ENCODE measurements at regions of chr5 and their contacts with region 1.

Region 1: DNA sequence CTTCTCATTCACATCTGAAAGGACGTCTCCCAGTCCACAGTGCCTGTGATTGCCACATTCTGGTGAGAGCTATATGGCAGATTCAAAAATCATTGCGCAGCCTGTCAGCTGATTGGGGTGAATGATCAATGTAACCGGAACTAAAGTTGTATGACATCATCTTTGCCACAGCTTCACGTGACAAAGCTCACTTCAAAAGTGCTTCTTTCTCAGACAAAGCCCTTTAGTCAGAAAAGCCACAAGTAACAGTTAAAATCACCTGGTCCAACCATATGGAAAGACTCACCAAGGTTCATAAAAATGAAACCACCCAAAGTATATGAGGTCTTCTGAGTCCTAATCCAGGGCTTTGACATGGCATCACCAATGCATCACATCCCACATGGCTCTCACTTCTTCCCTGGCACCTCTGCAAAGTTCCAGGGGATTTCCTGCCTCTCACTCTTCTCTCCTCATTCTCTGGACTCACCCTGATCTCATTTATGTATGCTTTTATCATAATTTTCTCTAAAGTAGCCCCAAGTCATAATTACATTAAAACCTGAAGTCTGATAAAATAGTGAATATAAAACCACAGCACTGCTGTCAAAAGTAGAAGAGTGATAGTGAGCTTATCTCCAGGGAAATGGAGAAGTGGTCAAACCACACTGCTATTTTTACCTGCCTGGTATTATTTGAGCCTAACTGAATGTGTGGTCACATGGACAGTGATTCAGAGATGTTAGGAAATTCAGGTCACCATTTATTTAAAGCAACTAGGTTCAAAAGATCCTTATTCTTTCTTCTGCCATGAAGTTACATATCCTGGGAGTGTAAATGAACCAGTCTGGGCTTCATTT is 193.1 kb upstream of the PTGER4 start:
- DNase-seq: peak; percentile 82
- ATAC-seq: peak; percentile 75
- H3K4me3 Mint-ChIP-seq: peak overlapping the region; percentile 12
- H3K27ac Mint-ChIP-seq: peak overlapping the region; percentile 91
- H3K4me1 Mint-ChIP-seq: peaks cover 82% of the 10 kb centered on the region
- H3K27me3 Mint-ChIP-seq: no peaks in the 10 kb centered on the region

Region 2: GRCh38 chr5:40001796-40002195 is 484.9 kb before region 1 on chr5:
- CTCF ChIA-PET with region 1: no interaction called
- POLR2A ChIA-PET with region 1: no interaction called
- intact Hi-C with region 1: no loop called
- DNase-seq: no peak
- ATAC-seq: no peak
- H3K4me3 Mint-ChIP-seq: no peak overlapping the region
- H3K27ac Mint-ChIP-seq: no peak overlapping the region
- H3K4me1 Mint-ChIP-seq: no peaks in the 10 kb centered on the region
- H3K27me3 Mint-ChIP-seq: peaks cover 12% of the 10 kb centered on the region

Region 3: DNA sequence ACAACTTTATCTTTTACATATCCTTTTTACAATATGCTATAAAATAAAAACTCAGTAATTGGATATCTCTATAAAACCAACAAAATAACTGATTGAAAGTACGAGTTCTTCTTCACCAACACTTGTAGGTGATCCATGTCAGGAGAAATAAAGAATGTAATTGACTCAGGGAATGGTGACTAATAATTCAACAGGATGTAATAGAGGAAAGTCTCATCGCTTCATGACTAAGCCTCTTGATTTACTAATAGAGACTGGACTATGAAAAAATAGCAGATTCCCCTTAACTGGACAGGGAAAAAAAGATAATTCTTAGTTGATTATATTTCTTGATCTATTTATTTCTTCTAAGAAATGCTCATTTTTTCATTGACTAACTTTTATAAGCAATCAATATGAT is 314.7 kb before region 1 on chr5:
- CTCF ChIA-PET with region 1: no interaction called
- POLR2A ChIA-PET with region 1: no interaction called
- intact Hi-C with region 1: loop called in 1 of 2 experiments (anchors 5 kb)
- DNase-seq: no peak
- ATAC-seq: no peak
- H3K4me3 Mint-ChIP-seq: no peak overlapping the region
- H3K27ac Mint-ChIP-seq: no peak overlapping the region
- H3K4me1 Mint-ChIP-seq: peaks cover 13% of the 10 kb centered on the region
- H3K27me3 Mint-ChIP-seq: no peaks in the 10 kb centered on the region

Region 4: GRCh38 chr5:40333459-40334244 is 153.0 kb before region 1 on chr5:
- CTCF ChIA-PET with region 1: no interaction called
- POLR2A ChIA-PET with region 1: no interaction called
- intact Hi-C with region 1: loop called (anchors 1 kb)
- DNase-seq: peak; percentile 49
- ATAC-seq: peak; percentile 96
- H3K4me3 Mint-ChIP-seq: no peak overlapping the region
- H3K27ac Mint-ChIP-seq: no peak overlapping the region
- H3K4me1 Mint-ChIP-seq: peaks cover 41% of the 10 kb centered on the region
- H3K27me3 Mint-ChIP-seq: no peaks in the 10 kb centered on the region

Region 5: DNA sequence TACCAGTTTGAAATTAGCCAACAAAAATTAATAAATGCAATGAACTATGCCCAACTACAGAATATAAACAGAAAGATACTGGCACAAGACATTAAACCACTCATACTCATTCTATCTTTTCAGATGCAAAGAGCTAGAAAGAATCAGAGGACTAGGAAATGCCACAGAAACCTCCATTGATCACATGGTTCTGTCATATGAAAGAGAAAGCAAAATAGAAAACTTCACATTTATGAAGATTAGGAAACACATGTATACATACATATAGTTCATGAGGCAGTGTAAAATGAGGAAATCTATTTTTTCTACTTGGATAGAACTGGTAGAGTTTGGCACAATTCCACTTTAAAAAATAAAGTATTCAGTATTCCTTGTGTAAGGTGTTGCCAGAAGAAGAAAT is 82.0 kb before region 1 on chr5:
- CTCF ChIA-PET with region 1: interaction called, 6 read pairs
- POLR2A ChIA-PET with region 1: interaction called, 13 read pairs
- intact Hi-C with region 1: loop called (anchors 1 kb)
- DNase-seq: no peak
- ATAC-seq: peak; percentile 28
- H3K4me3 Mint-ChIP-seq: peak overlapping the region; percentile 18
- H3K27ac Mint-ChIP-seq: peak overlapping the region; percentile 99
- H3K4me1 Mint-ChIP-seq: peaks cover 94% of the 10 kb centered on the region
- H3K27me3 Mint-ChIP-seq: no peaks in the 10 kb centered on the region

Region 6: GRCh38 chr5:40437452-40437861 is 49.2 kb before region 1 on chr5:
- CTCF ChIA-PET with region 1: interaction called, 4 read pairs
- POLR2A ChIA-PET with region 1: interaction called, 5 read pairs
- intact Hi-C with region 1: loop called (anchors 1 kb)
- DNase-seq: peak; percentile 55
- ATAC-seq: peak; percentile 61
- H3K4me3 Mint-ChIP-seq: no peak overlapping the region
- H3K27ac Mint-ChIP-seq: peak overlapping the region; percentile 61
- H3K4me1 Mint-ChIP-seq: peaks cover 80% of the 10 kb centered on the region
- H3K27me3 Mint-ChIP-seq: no peaks in the 10 kb centered on the region

Region 7: DNA sequence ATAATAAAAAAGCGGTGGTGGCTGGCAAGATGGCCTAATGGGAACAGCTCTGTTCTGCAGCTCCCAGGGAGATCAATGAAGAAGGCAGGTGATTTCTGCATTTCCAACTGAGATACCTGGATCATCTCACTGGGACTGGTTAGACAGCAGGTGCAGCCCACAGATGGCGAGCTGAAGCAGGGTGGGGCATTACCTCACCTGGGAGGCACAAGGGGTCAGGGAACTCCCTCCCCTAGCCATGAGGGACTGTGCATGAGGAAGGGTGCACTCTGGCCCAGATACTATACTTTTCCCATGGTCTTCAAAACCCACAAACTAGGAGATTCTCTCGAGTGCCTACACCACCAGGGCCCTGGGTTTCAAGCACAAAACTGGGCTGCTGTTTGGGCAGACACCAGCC is 147.5 kb after region 1 on chr5:
- CTCF ChIA-PET with region 1: no interaction called
- POLR2A ChIA-PET with region 1: no interaction called
- intact Hi-C with region 1: no loop called
- DNase-seq: no peak
- ATAC-seq: no peak
- H3K4me3 Mint-ChIP-seq: no peak overlapping the region
- H3K27ac Mint-ChIP-seq: no peak overlapping the region
- H3K4me1 Mint-ChIP-seq: no peaks in the 10 kb centered on the region
- H3K27me3 Mint-ChIP-seq: no peaks in the 10 kb centered on the region

Region 8: GRCh38 chr5:40679155-40679913 is 192.7 kb after region 1 on chr5:
- CTCF ChIA-PET with region 1: interaction called, 3 read pairs
- POLR2A ChIA-PET with region 1: interaction called, 4 read pairs
- intact Hi-C with region 1: loop called (anchors 1 kb)
- DNase-seq: peak; percentile 97
- ATAC-seq: peak; percentile 59
- H3K4me3 Mint-ChIP-seq: peak overlapping the region; percentile 93
- H3K27ac Mint-ChIP-seq: peak overlapping the region; percentile 97
- H3K4me1 Mint-ChIP-seq: peaks cover 38% of the 10 kb centered on the region
- H3K27me3 Mint-ChIP-seq: no peaks in the 10 kb centered on the region

Region 9: DNA sequence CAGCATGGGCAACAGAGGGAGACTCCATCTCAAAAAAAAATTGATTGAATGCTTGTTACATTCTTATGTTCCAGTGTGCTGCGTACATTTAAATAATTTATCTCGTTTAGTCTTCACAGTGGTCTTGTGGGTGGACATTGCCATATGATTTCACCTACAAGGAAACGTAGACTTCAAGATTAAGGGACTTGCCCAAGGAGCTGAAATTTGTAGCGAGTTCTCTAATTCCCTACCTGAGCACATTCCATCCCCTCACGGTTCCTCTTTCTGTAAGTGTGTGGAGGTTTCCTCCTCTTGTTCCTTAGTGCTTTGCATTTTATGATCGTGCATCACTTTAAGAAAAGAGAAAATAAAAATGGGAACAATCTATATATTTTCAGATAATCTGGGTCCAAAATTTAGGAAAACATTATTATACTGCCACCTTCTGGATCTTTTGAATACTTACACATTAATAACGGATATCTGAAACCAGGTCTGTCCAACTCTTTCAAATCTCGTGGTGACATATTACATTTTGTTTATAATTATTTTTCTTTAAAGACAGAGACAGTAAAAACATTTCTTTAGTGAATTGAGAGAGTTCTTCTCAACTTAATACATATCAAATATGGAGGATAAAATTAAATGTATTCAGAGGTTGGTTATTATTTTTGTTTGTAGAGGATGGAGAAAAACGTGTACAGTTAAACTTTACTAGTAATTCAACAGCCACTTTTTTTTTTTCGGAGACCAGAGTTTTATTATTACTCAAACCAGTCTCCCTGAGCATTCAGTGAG is 392.7 kb after region 1 on chr5:
- CTCF ChIA-PET with region 1: no interaction called
- POLR2A ChIA-PET with region 1: no interaction called
- intact Hi-C with region 1: loop called in 1 of 2 experiments (anchors 10 kb)
- DNase-seq: no peak
- ATAC-seq: no peak
- H3K4me3 Mint-ChIP-seq: no peak overlapping the region
- H3K27ac Mint-ChIP-seq: no peak overlapping the region
- H3K4me1 Mint-ChIP-seq: peaks cover 6% of the 10 kb centered on the region
- H3K27me3 Mint-ChIP-seq: peaks cover under 1% of the 10 kb centered on the region

Measured in activated CD4-positive, alpha-beta T cell treated with anti-CD3 and anti-CD28 coated beads for 36 hours (primary cell).